ENCODE measurements at regions of chr11 and their contacts with region 1.

Region 1: GRCh38 chr11:48109046-48109666 is 107.5 kb upstream of the OR4B1 start:
- DNase-seq: no peak

Region 2: GRCh38 chr11:47938791-47939560 is 170.2 kb before region 1 on chr11:
- intact Hi-C with region 1: loop called (anchors 5 kb)
- DNase-seq: no peak

Region 3: DNA sequence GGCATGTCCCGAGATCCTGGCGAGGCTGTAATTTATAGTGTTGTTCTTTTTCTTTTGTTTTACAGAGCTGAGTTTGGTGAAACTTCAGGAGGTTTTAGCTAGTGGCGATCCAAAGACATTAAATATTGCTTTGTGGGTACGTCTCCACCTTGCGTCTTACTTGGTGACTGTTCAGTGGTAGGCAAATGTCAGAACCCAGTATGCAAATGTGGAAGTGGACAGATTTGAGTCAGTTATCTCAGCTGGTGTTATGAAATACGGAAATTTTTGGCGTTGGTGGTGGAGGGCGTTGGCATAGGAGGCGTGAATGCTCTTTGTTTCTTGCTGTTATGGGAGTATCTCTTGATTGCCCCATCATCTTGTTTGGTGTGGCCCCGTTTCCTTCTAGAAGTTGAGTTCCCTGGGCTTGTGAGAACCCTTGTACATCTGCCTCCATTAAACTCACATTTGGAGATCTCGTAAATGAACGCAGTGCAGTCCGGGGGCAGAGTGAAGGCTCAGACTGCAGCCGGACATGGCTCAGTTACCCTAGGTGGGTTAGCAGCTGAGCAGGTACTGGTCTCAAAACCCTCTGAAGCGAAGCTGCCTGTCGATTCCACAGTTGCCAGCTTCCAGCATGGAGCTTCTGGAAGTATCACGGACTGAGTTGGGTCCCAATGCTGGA is 88.9 kb before region 1 on chr11:
- intact Hi-C with region 1: loop called in 1 of 2 experiments (anchors 10 kb)
- DNase-seq: peak; percentile 47

Region 4: GRCh38 chr11:48034926-48035871 is 74.0 kb before region 1 on chr11:
- intact Hi-C with region 1: no loop called
- DNase-seq: peak; percentile 90

Measured in posterior vena cava (tissue), 2 donors.